ENCODE measurements at regions of chr6 and their contacts with region 1.

Region 1: GRCh38 chr6:3825851-3826581 is 23.2 kb upstream of the FAM50B start:
- DNase-seq: peak; percentile 100
- H3K4me3 ChIP-seq: peak overlapping the region in 1 of 3 experiments; percentile 15
- H3K27ac ChIP-seq: peak overlapping the region; percentile 96
- H3K4me1 ChIP-seq: peaks cover 43% of the 10 kb centered on the region
- H3K27me3 ChIP-seq: no peaks in the 10 kb centered on the region
- CTCF ChIP-seq: no peak
- POLR2A ChIP-seq: no peak

Region 2: GRCh38 chr6:3742426-3743344 is 83.3 kb before region 1 on chr6:
- CTCF ChIA-PET with region 1: interaction called, 18 read pairs
- POLR2A ChIA-PET with region 1: interaction called, 9 read pairs
- dilution Hi-C with region 1: no loop called
- intact Hi-C with region 1: no loop called
- DNase-seq: peak; percentile 88
- H3K4me3 ChIP-seq: peak overlapping the region in 1 of 3 experiments; percentile 25
- H3K27ac ChIP-seq: peak overlapping the region; percentile 74
- H3K4me1 ChIP-seq: peaks cover 77% of the 10 kb centered on the region
- H3K27me3 ChIP-seq: no peaks in the 10 kb centered on the region
- CTCF ChIP-seq: peak; percentile 88 to 93
- POLR2A ChIP-seq: no peak

Region 3: GRCh38 chr6:3751730-3752542 is 74.1 kb before region 1 on chr6:
- CTCF ChIA-PET with region 1: interaction called, 18 read pairs
- POLR2A ChIA-PET with region 1: interaction called, 14 read pairs
- dilution Hi-C with region 1: no loop called
- intact Hi-C with region 1: loop called (anchors 1 kb)
- DNase-seq: peak; percentile 95
- H3K4me3 ChIP-seq: peak overlapping the region; percentile 85 to 96 (median 89)
- H3K27ac ChIP-seq: peak overlapping the region; percentile 99
- H3K4me1 ChIP-seq: peaks cover 42% of the 10 kb centered on the region
- H3K27me3 ChIP-seq: no peaks in the 10 kb centered on the region
- CTCF ChIP-seq: peak; percentile 24 to 60
- POLR2A ChIP-seq: no peak

Region 4: DNA sequence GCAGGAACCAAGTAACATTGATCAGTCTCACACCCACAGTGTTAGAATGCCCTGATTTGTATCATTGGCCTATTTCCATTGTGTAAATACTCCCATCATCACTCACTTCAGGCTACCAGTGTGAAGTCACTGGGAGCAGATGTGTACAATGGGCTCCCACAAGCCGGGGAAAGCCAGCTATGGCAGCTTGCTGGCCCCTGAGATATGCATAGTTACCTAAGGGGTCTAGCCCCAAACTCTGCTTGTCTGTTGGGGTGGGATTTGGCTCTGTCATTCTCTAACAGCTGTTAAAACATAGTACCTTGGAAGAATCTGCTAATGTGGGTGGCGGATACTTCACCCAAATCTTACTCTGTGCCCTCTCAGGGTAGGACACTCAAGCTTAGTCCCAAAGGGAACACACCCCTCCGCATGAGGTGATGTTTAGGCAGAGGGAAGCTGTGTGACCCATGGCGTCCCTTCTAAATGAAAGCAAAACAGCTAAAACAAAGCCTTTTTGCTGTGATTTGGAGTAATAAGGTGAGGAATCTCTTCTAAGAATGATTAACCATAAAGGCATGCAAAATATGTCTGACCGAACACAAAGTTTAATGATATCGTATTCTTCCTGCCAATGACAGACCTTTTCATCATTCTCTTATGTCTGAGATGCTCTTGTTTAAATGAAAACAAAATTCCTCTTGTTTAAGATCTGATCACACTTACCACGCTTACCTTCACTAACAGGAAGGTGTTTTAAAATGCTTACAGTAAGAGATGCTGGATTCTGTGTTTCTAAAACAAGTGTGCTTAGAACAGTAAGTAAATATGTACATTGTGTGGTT is 28.6 kb before region 1 on chr6:
- CTCF ChIA-PET with region 1: interaction called, 22 read pairs
- POLR2A ChIA-PET with region 1: interaction called, 15 read pairs
- dilution Hi-C with region 1: no loop called
- intact Hi-C with region 1: loop called (anchors 1 kb)
- DNase-seq: peak; percentile 83
- H3K4me3 ChIP-seq: no peak overlapping the region
- H3K27ac ChIP-seq: peak overlapping the region; percentile 100
- H3K4me1 ChIP-seq: peaks cover 39% of the 10 kb centered on the region
- H3K27me3 ChIP-seq: no peaks in the 10 kb centered on the region
- CTCF ChIP-seq: no peak
- POLR2A ChIP-seq: peak; percentile 58

Region 5: GRCh38 chr6:3805448-3806123 is 20.4 kb before region 1 on chr6:
- CTCF ChIA-PET with region 1: interaction called, 17 read pairs
- POLR2A ChIA-PET with region 1: interaction called, 9 read pairs
- dilution Hi-C with region 1: no loop called
- intact Hi-C with region 1: loop called (anchors 1 kb)
- DNase-seq: peak; percentile 79
- H3K4me3 ChIP-seq: no peak overlapping the region
- H3K27ac ChIP-seq: peak overlapping the region; percentile 96
- H3K4me1 ChIP-seq: peaks cover 51% of the 10 kb centered on the region
- H3K27me3 ChIP-seq: no peaks in the 10 kb centered on the region
- CTCF ChIP-seq: no peak
- POLR2A ChIP-seq: no peak

Region 6: DNA sequence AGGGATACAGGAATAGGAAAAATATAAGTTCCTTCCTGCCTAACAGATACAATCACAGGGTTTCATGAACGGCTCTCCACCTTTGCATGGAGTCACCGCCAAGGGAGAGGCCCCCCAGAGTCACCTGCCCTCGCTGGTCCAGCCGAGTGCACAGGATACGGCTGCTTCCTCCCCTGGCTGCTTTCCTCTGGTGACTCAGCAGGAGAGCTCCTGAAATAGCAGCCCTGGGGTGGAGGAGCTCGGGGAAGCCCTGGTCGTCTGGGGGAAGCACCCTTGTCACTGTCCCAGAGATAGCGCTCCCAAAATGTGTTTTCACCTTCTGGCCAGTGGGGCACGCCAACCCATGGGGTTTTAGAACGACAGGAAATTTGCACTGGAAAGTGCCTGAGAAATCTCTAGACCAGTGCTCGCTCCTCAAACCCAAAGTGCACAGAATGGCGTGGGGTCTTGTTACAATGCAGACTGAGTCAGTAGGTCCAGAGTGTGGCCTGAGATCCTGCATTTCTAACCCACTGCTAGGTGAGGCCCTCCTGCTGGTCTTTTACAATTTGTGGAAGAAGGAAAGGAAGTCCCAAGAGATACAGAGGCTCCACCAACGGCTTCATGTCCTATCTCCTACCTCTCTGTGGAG is 12.8 kb before region 1 on chr6:
- CTCF ChIA-PET with region 1: interaction called, 17 read pairs
- POLR2A ChIA-PET with region 1: interaction called, 12 read pairs
- dilution Hi-C with region 1: no loop called
- intact Hi-C with region 1: loop called (anchors 1 kb)
- DNase-seq: peak; percentile 95
- H3K4me3 ChIP-seq: no peak overlapping the region
- H3K27ac ChIP-seq: peak overlapping the region; percentile 95
- H3K4me1 ChIP-seq: peaks cover 44% of the 10 kb centered on the region
- H3K27me3 ChIP-seq: no peaks in the 10 kb centered on the region
- CTCF ChIP-seq: no peak
- POLR2A ChIP-seq: peak; percentile 55

Region 7: GRCh38 chr6:3943331-3943765 is 117.3 kb after region 1 on chr6:
- CTCF ChIA-PET with region 1: no interaction called
- POLR2A ChIA-PET with region 1: no interaction called
- dilution Hi-C with region 1: no loop called
- intact Hi-C with region 1: no loop called
- DNase-seq: peak; percentile 89
- H3K4me3 ChIP-seq: no peak overlapping the region
- H3K27ac ChIP-seq: no peak overlapping the region
- H3K4me1 ChIP-seq: peaks cover 4% of the 10 kb centered on the region
- H3K27me3 ChIP-seq: peaks cover 5 to 20% of the 10 kb centered on the region in 2 experiments
- CTCF ChIP-seq: no peak
- POLR2A ChIP-seq: no peak

Region 8: DNA sequence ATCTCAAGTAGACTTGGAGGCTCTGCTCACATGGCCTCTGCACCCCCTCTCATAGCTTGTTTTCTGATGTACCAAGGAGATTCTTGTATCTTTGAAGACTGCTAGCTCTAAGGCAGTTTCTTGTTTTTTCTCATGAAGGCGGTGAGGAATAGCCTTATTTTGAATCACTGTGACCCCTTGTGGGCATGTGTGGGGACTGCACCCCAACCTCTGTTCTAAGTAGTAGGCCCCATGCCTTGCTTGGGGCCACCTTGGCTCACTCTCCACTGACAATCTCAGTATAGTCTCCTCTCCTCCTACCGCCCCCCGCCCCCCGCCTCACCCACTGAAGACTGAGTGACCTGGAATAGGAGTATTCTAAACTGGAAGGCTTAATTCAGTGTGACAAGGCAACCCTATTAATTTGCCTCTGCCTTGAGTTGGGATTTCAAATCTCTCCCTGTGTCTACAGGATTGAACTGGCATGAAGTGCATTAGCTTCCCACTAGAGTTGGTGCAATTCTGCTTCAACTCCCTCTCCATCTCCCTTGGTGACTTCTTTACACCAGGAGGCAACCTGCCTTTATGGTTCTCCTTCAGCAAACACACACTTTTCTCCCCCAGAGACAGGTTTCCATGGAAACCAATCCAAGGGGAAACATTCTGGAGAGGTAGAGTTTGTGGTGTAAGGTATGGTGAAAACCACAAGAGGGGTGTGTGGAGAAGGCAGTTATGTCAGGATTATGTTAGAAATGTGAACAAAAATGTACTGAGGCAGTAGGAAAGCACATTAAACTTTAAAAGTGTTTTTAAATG is 384.8 kb after region 1 on chr6:
- CTCF ChIA-PET with region 1: no interaction called
- POLR2A ChIA-PET with region 1: no interaction called
- dilution Hi-C with region 1: no loop called
- intact Hi-C with region 1: no loop called
- DNase-seq: peak; percentile 74
- H3K4me3 ChIP-seq: no peak overlapping the region
- H3K27ac ChIP-seq: no peak overlapping the region
- H3K4me1 ChIP-seq: no peaks in the 10 kb centered on the region
- H3K27me3 ChIP-seq: peaks cover under 1 to 3% of the 10 kb centered on the region in 2 experiments
- CTCF ChIP-seq: peak; percentile 72 to 80
- POLR2A ChIP-seq: no peak

Region 9: GRCh38 chr6:4743062-4743461 is 917.0 kb after region 1 on chr6:
- CTCF ChIA-PET with region 1: no interaction called
- POLR2A ChIA-PET with region 1: no interaction called
- dilution Hi-C with region 1: no loop called
- intact Hi-C with region 1: no loop called
- DNase-seq: no peak
- H3K4me3 ChIP-seq: no peak overlapping the region
- H3K27ac ChIP-seq: no peak overlapping the region
- H3K4me1 ChIP-seq: no peaks in the 10 kb centered on the region
- H3K27me3 ChIP-seq: peaks cover 4 to 9% of the 10 kb centered on the region in 2 experiments
- CTCF ChIP-seq: no peak
- POLR2A ChIP-seq: no peak